Mammary epithelial cell (primary cell): ENCODE measurements at regions of chr20 and their contacts with region 1.

Region 1: DNA sequence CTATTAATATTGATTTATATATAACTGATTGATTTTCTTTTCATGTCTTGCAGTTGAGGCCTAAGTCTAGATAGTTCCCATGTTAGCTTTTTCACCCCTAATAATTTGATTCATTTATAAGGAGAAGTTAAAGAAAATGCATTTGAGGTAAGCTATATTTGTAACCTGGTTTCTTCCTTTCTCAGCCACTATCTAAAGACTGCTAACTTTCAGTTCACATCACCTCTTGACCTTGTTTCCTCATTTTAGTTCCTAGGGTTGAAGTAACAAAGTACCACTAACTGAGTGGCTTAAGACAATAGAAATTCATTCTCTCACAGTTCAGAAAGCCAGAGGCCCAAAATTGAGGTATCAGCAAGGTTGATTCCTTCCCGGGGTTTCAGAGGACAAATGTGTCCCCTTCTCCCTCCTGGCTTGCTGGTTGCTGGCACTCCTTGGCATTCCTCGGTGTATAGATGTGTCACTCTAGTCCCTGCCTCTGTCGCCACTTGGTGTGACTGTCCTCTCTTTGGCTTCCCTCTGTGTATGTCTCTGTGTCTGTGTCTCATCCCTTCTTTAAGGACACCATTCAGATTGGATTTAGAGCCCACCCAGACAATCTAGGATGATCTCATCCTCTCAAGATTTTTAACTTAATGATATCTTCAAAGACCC is 55.9 kb upstream of the C20orf144 start:
- DNase-seq: no peak
- H3K4me3 ChIP-seq: no peak overlapping the region
- H3K27ac ChIP-seq: no peak overlapping the region
- H3K4me1 ChIP-seq: peaks cover 19% of the 10 kb centered on the region
- H3K27me3 ChIP-seq: no peaks in the 10 kb centered on the region
- CTCF ChIP-seq: no peak

Region 2: DNA sequence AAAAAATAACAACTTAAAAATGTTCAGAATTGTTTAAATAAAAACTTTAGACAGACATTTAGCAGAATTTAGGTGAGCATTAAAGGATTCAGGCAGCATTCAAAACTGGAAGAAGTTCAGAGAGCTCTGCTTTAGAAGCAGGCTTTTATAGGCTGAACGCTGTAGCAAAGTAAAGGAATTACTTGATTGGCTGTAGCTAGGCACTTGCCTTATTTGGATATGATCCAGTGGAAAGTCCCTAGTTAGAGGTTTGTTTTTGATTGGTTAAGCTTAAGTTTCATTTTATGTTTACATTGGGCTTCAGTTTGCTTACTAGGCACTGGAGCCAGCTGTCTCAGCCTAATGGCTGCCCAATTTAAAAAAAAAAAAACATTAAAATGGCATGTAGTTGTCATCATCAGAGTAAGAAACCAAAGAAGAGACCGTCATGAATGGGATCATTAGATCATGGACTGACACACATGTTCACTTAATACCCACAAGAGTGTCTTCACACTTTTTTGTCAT is 51.3 kb before region 1 on chr20:
- CTCF ChIA-PET with region 1: no interaction called
- dilution Hi-C with region 1: loop called (anchors 5 kb)
- in situ Hi-C with region 1: no loop called
- intact Hi-C with region 1: no loop called
- DNase-seq: peak; percentile 86
- H3K4me3 ChIP-seq: peak overlapping the region in 1 of 3 experiments; percentile 10
- H3K27ac ChIP-seq: peak overlapping the region; percentile 34
- H3K4me1 ChIP-seq: peaks cover 9% of the 10 kb centered on the region
- H3K27me3 ChIP-seq: no peaks in the 10 kb centered on the region
- CTCF ChIP-seq: no peak

Region 3: DNA sequence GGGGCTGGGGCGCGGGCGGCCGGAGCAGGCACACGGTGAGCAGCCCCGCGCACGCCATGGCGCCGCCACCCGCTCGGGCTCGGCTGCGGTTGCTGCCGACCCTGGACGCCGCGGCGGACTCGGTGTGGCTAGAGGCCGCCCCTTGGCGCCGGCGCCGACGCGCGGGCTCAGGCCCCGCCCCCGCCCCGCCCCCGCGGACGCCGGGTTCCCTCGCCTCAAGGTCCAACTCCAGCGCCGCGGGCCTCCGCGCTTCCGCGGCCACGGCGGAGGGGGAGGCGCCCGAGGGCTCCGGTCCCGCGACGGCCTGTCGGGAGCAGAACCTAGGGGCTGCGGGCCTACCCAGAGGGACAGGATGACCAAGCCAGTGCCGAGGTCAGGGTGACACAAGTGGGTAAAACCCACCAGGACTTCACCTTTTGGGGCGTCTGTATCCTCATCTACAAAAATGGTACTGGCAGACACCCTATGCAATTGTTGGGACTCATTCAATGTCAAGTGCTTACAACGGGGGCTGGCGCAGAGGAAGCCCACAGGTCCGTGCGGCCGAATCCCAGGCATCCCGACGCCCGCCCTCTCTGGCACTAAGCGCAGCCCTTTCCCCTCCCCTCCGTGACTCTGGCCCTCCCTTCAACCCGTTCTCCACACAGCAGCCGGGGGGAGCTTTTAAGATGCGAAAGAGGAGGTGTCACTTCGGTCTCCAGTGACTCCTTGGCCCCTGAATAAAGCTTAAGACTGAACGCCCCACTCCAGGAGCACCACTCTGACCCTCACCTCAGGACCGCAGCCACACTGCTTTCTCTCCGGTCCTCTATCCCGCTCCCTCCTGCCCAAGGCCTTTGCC is 68.3 kb after region 1 on chr20 and contains the start of gene NECAB3:
- CTCF ChIA-PET with region 1: no interaction called
- dilution Hi-C with region 1: loop called (anchors 10 kb)
- in situ Hi-C with region 1: no loop called
- intact Hi-C with region 1: no loop called
- DNase-seq: peak; percentile 47
- H3K4me3 ChIP-seq: peak within 1 kb of the TSS; percentile 46 to 59 (median 50)
- H3K27ac ChIP-seq: peak within 1 kb of the TSS; percentile 7
- H3K4me1 ChIP-seq: peaks cover 12% of the 10 kb centered on the region
- H3K27me3 ChIP-seq: no peaks in the 10 kb centered on the region
- CTCF ChIP-seq: no peak
- total RNA-seq, gene NECAB3: 14.6 to 14.7 TPM

Region 4: DNA sequence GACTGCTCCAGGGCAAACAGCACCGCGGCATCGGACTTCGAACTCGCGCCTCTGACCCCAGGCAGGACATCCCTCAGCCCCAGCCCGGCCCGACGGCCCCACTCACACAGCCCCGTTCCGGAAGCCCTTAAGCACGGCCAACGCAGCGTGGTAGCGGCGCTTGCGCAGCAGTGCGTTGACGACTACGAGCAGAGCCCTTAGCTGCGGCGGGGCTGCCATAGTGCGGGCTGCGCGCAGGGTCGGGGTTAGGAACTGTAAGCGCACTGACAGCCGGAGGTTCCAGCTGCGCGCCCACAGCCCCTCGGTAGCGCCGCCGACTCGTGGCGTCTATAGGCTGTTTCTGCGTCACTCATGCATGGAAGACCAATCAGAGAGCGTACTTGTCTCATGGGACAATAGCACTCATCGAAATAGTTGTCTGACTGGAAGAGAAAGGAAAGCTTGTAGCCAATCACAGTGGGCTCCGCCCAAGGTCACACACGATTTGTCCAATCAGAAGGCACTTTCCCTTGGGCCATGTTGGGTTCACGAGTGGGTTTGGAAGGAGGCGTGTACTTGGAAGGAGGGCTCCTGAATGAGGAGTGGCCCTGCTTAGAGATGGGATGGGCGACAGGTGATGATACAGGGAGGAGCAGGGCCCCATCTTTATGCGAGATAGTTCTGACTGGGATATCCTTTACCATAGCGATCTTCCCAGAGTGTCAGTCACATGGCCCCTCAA is 113.9 kb after region 1 on chr20 and contains the start of gene PXMP4:
- CTCF ChIA-PET with region 1: no interaction called
- dilution Hi-C with region 1: no loop called
- in situ Hi-C with region 1: no loop called
- intact Hi-C with region 1: no loop called
- DNase-seq: peak; percentile 97
- H3K4me3 ChIP-seq: peak within 1 kb of the TSS; percentile 70 to 88 (median 80)
- H3K27ac ChIP-seq: peak within 1 kb of the TSS; percentile 5
- H3K4me1 ChIP-seq: no peaks in the 10 kb centered on the region
- H3K27me3 ChIP-seq: no peaks in the 10 kb centered on the region
- CTCF ChIP-seq: no peak
- total RNA-seq, gene PXMP4: 8.0 to 11.3 TPM